Activated naive CD4-positive, alpha-beta T cell treated with anti-CD3 and anti-CD28 coated beads for 36 hours (primary cell): ENCODE measurements at regions of chr9 and their contacts with region 1.

Region 1: GRCh38 chr9:33024966-33025571 is at the start of gene DNAJA1:
- DNase-seq: peak; percentile 93
- H3K4me3 Mint-ChIP-seq: peak within 1 kb of the TSS; percentile 95
- H3K27ac Mint-ChIP-seq: peak within 1 kb of the TSS; percentile 94
- H3K4me1 Mint-ChIP-seq: peaks cover 75% of the 10 kb centered on the region
- H3K27me3 Mint-ChIP-seq: no peaks in the 10 kb centered on the region
- total RNA-seq, gene DNAJA1: 110 to 120 TPM

Region 2: GRCh38 chr9:32550562-32551433 is 474.3 kb before region 1 on chr9:
- CTCF ChIA-PET with region 1: no interaction called
- intact Hi-C with region 1: loop called (anchors 1 kb)
- DNase-seq: peak; percentile 93
- H3K4me3 Mint-ChIP-seq: peak overlapping the region; percentile 95
- H3K27ac Mint-ChIP-seq: peak overlapping the region; percentile 99
- H3K4me1 Mint-ChIP-seq: peaks cover 43% of the 10 kb centered on the region
- H3K27me3 Mint-ChIP-seq: no peaks in the 10 kb centered on the region

Region 3: DNA sequence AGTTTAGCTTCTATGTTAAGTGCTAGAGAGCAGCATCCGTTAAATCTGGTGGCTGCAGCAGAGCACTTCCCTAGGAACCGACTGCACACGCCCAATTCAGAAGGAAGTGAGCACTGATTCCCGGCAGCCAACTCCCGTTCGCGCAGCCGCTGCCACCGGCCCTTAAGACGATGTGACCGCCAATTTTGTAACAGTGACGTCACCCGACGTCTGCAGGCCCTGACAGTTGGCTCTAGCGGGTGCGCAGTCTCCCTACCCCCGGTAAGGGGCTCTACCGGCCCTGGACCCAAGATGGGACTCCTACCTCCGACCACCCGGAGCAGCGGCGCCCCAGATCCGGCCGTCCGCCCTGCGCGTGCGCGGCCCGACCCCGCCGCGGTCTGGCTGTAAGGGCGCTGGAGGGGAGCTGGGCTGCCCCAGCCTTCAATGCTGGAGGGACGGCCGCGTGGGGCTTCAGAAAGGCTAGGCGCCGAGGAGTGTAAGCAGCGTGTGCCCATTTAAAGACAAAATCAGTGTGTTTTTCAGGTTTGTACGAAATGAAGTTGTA is 19.1 kb after region 1 on chr9:
- CTCF ChIA-PET with region 1: interaction called, 3 read pairs
- intact Hi-C with region 1: loop called (anchors 1 kb)
- DNase-seq: peak; percentile 85
- H3K4me3 Mint-ChIP-seq: peak overlapping the region; percentile 71
- H3K27ac Mint-ChIP-seq: peak overlapping the region; percentile 72
- H3K4me1 Mint-ChIP-seq: peaks cover 17% of the 10 kb centered on the region
- H3K27me3 Mint-ChIP-seq: no peaks in the 10 kb centered on the region

Region 4: GRCh38 chr9:33159760-33160127 is 134.7 kb after region 1 on chr9:
- CTCF ChIA-PET with region 1: interaction called, 3 read pairs
- intact Hi-C with region 1: loop called (anchors 2 kb)
- DNase-seq: peak; percentile 87
- H3K4me3 Mint-ChIP-seq: peak overlapping the region; percentile 64
- H3K27ac Mint-ChIP-seq: peak overlapping the region; percentile 97
- H3K4me1 Mint-ChIP-seq: peaks cover 92% of the 10 kb centered on the region
- H3K27me3 Mint-ChIP-seq: no peaks in the 10 kb centered on the region

Region 5: DNA sequence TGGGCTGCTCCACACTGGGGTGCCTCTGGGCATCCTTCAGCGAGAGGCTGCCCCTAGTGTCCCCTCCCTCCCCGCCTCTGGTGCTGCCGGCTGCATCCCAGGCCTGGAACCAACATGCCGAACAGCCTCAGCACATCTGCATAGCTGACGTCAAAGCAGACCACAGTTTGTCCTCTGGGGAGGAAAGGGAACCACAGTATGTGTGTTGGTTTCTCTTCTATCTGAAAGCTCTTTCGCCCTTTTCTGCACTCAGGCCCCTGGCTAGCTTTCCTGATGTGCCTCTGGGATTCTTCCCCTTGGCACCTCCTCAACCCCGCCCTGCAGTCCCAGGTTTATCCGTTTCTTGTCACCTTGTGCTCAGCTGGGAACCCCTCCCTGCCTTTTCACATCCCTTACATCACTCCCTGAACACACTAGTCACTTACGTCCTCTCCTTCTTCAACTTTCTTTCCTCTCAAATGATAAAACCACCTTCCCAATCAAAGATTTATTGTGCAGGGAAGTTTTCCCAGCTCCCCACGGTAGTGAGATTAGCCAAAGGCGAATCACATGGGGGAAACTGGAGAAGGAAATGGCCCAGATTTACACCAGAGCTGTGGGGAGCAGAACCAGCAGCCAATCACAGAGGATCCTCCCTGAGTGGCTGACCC is 177.6 kb after region 1 on chr9:
- CTCF ChIA-PET with region 1: no interaction called
- intact Hi-C with region 1: no loop called
- DNase-seq: peak; percentile 48
- H3K4me3 Mint-ChIP-seq: no peak overlapping the region
- H3K27ac Mint-ChIP-seq: no peak overlapping the region
- H3K4me1 Mint-ChIP-seq: peaks cover 11% of the 10 kb centered on the region
- H3K27me3 Mint-ChIP-seq: no peaks in the 10 kb centered on the region

Region 6: DNA sequence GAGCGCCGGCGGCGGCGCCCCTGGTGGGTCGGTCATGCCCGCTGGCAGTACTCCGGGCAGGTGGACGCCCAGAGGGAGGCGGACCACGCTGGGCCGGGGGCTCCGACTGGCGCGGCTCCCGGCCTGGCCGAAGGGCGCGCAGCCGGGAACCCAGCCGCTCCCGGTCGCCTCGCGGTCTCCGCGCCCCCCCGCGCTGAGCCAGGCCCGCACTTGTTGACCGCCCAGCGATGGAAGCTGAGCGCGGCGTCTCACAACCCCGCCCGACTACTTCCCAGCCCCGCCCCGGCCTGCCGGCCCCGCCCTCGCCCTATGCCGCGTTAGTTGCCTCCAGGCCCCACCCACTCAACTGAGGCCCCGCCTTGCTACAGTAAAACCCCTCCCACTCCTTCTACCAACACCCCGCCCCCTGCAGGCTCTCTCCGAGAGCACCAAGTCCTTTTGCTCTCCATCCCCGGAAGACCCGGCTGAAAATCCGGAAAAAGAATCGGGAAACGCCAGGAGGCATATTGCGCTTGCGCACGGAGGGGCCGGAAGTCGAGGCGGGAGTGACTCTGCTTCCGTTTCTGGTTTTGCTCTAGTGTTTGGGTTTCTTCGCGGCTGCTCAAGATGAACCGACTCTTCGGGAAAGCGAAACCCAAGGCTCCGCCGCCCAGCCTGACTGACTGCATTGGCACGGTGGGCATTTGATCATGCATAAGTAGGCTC is 239.6 kb after region 1 on chr9 and contains the starts of genes BAG1 and CHMP5:
- CTCF ChIA-PET with region 1: no interaction called
- intact Hi-C with region 1: loop called (anchors 1 kb)
- DNase-seq: peak; percentile 100
- H3K4me3 Mint-ChIP-seq: peak within 1 kb of the TSS; percentile 94
- H3K27ac Mint-ChIP-seq: peak within 1 kb of the TSS; percentile 98
- H3K4me1 Mint-ChIP-seq: peaks cover 47% of the 10 kb centered on the region
- H3K27me3 Mint-ChIP-seq: no peaks in the 10 kb centered on the region
- total RNA-seq, gene BAG1: 38.1 to 40.5 TPM
- total RNA-seq, gene CHMP5: 151 to 162 TPM